Activated CD4-positive, alpha-beta T cell treated with anti-CD3 and anti-CD28 coated beads, Interleukin-2, amount 10 ng/mL, durations not matched to agents 24 days and 14 days (primary cell): ENCODE measurements at regions of chr4 and their contacts with region 1.

Region 1: DNA sequence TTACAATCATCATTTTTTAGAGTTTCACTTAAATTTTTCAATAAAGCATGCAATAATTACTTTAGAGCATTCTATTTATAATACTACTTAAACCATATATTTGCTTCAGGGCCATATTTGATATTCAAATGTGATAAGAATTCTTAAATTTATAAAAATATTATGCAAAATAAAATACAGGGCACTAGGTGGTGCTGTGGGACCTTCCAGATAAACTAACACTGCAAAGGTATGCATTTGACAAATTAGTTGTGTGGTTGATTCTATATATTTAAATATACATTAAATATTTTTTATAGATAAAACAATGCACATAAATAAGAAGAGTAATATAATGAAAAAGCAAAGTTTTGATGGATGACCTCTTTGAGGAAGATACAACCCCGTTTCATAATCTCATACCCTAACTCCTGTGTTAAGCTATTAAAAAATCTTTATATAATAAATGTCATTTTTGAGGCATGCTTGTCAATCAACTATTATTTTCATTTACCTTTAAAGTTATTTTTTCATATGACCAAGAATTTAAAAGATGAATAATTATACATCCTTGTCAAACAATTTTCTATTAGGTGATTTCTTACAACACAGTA is 128.4 kb downstream of the REELD1 start:
- DNase-seq: peak; percentile 72
- H3K4me3 Mint-ChIP-seq: no peak overlapping the region
- H3K27ac Mint-ChIP-seq: no peak overlapping the region
- H3K4me1 Mint-ChIP-seq: peaks cover 6% of the 10 kb centered on the region
- H3K27me3 Mint-ChIP-seq: no peaks in the 10 kb centered on the region

Region 2: GRCh38 chr4:146450524-146450923 is 107.8 kb after region 1 on chr4:
- intact Hi-C with region 1: loop called (anchors 5 kb)
- DNase-seq: no peak
- H3K4me3 Mint-ChIP-seq: peak overlapping the region; percentile 56
- H3K27ac Mint-ChIP-seq: peak overlapping the region; percentile 84
- H3K4me1 Mint-ChIP-seq: peaks cover 23% of the 10 kb centered on the region
- H3K27me3 Mint-ChIP-seq: no peaks in the 10 kb centered on the region

Region 3: DNA sequence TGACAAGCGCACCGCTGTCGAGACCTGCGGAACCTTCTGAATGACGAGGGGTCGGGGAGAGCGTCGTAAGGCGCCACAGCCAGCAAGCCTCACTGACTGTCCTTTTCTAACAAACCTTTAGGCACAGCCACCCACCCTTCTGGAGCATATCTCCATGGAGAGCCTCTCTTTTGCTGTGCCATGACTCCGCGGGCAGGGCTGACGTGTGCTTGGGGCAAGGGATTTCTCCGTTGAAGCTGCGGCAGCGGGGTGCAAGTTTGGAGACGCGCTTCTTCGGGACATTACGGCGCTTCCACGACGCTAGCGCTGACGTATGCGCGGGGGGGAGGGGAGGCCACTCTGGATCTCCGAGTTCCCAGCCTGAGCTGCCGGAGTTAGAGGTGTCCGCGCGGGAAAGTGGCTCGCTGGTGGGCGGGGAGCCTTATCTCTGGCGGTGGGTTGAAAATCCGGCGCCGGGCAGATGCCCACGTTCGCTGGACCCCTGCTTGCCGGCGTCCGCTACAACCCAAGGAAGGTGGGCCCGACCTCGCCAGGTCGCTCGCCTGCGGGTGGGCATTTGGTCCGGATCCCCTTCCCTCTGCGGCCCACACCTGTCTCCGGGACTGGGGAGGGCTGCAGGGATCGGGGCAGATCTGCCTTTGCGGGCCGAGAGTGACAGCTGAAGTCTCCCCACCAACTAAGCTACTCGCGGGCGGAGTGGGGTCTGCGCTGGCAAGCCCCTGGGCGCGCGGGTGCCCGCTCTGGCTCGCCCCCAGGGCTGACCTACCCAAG is 179.6 kb after region 1 on chr4:
- intact Hi-C with region 1: loop called (anchors 5 kb)
- DNase-seq: peak; percentile 96
- H3K4me3 Mint-ChIP-seq: no peak overlapping the region
- H3K27ac Mint-ChIP-seq: no peak overlapping the region
- H3K4me1 Mint-ChIP-seq: peaks cover 18% of the 10 kb centered on the region
- H3K27me3 Mint-ChIP-seq: no peaks in the 10 kb centered on the region

Region 4: GRCh38 chr4:146637621-146638135 is 295.0 kb after region 1 on chr4:
- intact Hi-C with region 1: loop called (anchors 2 kb)
- DNase-seq: no peak
- H3K4me3 Mint-ChIP-seq: no peak overlapping the region
- H3K27ac Mint-ChIP-seq: peak overlapping the region; percentile 67
- H3K4me1 Mint-ChIP-seq: peaks cover 10% of the 10 kb centered on the region
- H3K27me3 Mint-ChIP-seq: peaks cover 87% of the 10 kb centered on the region

Region 5: DNA sequence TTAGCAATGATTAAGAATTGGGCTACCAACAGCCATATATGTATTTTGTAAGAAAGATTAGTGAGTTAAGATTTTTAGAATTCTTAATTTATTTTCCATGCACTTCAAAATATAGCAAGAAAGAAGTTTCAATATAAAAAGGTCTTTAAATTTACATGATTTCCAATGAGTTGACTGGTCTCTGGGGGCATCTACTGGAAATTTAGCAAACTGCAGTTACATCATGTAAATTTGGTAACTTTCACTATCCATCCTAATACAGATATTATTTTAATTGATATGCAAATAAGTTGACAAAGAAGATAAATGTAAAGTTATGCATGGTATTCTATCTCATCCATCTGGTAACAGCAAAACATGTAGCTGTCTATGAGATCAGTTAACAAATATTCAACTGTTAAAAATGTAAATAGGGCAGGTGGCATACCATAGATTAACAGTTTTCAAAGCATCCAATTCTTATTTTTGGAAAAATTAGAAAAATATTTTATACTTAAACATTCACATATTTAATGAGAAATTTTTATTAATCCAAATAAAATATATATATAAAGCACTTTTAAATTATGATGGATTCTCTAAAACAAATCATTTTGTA is 573.9 kb after region 1 on chr4:
- intact Hi-C with region 1: loop called (anchors 1 kb)
- DNase-seq: peak; percentile 73
- H3K4me3 Mint-ChIP-seq: no peak overlapping the region
- H3K27ac Mint-ChIP-seq: no peak overlapping the region
- H3K4me1 Mint-ChIP-seq: no peaks in the 10 kb centered on the region
- H3K27me3 Mint-ChIP-seq: peaks cover 8% of the 10 kb centered on the region

Region 6: DNA sequence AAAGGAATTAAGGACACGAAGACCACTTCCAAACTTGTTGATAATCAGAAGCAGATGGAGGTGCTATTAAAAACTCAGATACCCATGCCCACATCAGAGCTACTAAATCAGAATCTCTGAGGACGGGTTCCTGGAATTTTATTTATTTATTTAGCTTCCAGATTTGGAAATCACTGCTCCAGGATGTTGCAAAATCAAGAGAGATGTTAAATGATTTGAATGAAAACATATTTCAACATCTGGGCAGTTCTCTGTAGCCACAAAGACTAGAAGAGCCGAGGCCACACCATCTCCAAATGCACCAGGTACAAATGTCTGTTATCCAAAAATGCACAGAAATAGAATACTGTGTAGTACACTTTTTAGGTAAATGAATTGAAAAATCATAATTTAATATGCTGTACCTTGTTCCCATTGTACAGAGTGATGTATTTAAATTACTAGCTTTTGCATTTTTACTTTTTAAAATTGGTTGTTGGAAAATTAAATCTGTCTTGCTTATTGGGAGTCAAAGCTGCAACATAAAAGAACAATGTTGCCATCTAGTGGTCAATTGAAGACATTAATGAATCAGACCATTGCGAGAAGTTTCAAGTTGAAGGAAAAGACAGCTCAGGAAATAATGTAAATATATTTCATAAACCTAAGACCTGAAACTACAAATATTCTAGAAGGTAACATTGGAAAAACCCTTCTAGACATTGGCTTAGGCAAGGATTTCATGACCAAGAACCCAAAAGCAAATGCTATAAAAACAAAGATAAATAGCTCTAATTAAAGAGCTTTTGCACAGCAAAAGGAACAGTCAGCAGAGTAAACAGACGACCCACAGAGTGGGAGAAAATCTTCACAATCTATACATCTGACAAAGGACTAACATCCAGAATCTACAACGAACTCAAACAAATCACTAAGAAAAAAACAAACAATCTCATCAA is 754.2 kb after region 1 on chr4:
- intact Hi-C with region 1: loop called (anchors 2 kb)
- DNase-seq: no peak
- H3K4me3 Mint-ChIP-seq: no peak overlapping the region
- H3K27ac Mint-ChIP-seq: no peak overlapping the region
- H3K4me1 Mint-ChIP-seq: no peaks in the 10 kb centered on the region
- H3K27me3 Mint-ChIP-seq: peaks cover 2% of the 10 kb centered on the region